H1 (cell line): ENCODE measurements at regions of chr19 and their contacts with region 1.

Region 1: GRCh38 chr19:48461982-48462655 is 6.7 kb downstream of the KCNJ14 start:
- DNase-seq: peak; percentile 75 to 88
- H3K4me3 ChIP-seq: no peak overlapping the region
- H3K27ac ChIP-seq: no peak overlapping the region
- H3K4me1 ChIP-seq: peaks cover 0 to 2% (median under 1%) of the 10 kb centered on the region in 4 experiments; a peak in 1 of 7 replicates
- H3K27me3 ChIP-seq: no peaks in the 10 kb centered on the region
- CTCF ChIP-seq: no peak
- EP300 ChIP-seq: no peak
- POLR2A ChIP-seq: no peak
- RAD21 ChIP-seq: no peak

Region 2: GRCh38 chr19:48445606-48446481 is 16.3 kb before region 1 on chr19 and contains the start of gene GRWD1:
- CTCF ChIA-PET with region 1: interaction called, 3 read pairs
- POLR2A ChIA-PET with region 1: interaction called, 17 read pairs
- DNase-seq: peak; percentile 90 to 91
- H3K4me3 ChIP-seq: peak within 1 kb of the TSS; percentile 80 to 99 (median 95)
- H3K27ac ChIP-seq: peak within 1 kb of the TSS; percentile 62
- H3K4me1 ChIP-seq: peaks cover 0 to 5% (median 4%) of the 10 kb centered on the region in 4 experiments; a peak in 4 of 7 replicates
- H3K27me3 ChIP-seq: no peaks in the 10 kb centered on the region
- CTCF ChIP-seq: no peak
- EP300 ChIP-seq: no peak
- POLR2A ChIP-seq: peak; percentile 47 to 94
- RAD21 ChIP-seq: 0 out of 4 replicates have a peak, but pooled peaks of 1 of the 2 experiments have one; percentile 0
- total RNA-seq, gene GRWD1: 61.9 and 64.9 TPM in 2 replicates

Region 3: DNA sequence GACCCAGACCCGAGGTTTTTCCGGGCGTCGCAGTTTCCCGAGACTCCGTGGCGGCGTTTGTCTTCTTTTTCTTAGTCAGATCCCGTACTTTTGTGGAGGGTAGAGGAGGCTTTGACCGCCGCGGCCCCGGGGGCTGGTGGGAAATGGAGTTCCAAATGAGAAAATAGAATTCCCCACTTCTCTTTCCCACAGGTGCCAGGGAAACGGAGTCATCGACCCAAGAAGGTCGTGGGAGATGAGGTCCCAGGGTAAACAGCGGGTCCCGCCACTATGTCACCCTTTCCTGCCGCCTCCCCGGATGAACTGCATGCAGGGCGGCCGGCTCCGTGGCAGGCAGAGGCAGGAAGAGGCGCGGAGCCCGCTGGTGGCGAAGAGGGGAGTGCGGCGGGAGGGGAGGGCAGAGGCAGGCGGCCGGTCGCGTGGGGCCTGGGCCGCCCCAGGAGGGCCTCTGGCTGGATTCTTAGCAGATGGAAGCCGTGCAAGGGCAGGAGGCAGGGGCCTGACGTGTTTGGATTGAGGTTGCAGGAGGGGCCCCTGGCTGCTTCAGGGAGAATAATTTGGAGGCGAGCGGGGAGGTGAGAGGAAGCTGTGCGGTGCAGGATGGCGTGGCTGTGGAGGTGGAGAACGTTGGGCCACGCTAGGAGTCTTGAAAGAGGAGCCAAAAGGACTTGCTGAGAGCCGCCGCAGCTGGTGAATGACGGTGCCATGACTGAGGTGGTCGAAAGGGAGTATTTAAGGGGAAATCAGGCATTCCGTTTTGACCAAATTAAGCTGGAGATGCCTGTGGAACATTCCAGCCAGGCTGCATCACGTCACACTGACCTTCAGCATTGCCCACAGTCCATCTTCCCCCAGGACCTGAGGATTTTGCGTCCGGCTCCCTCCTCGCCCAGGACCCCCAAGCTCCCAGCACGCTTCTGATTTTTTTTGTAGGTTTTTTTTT is 18.7 kb after region 1 on chr19:
- CTCF ChIA-PET with region 1: no interaction called
- POLR2A ChIA-PET with region 1: interaction called, 10 read pairs
- DNase-seq: no peak
- H3K4me3 ChIP-seq: peak overlapping the region in 1 of 4 experiments; percentile 29; a peak in 1 of 8 replicates
- H3K27ac ChIP-seq: no peak overlapping the region
- H3K4me1 ChIP-seq: peaks cover 0 to 1% (median 0%) of the 10 kb centered on the region in 4 experiments; a peak in 1 of 7 replicates
- H3K27me3 ChIP-seq: no peaks in the 10 kb centered on the region; a peak in 1 of 7 replicates
- CTCF ChIP-seq: no peak
- EP300 ChIP-seq: no peak
- POLR2A ChIP-seq: no peak; a peak in 1 of 3 replicates
- RAD21 ChIP-seq: no peak

Region 4: GRCh38 chr19:48553676-48554386 is 91.7 kb after region 1 on chr19:
- CTCF ChIA-PET with region 1: no interaction called
- POLR2A ChIA-PET with region 1: no interaction called
- DNase-seq: no peak
- H3K4me3 ChIP-seq: peak overlapping the region in 2 of 4 experiments; percentile 5 to 44; a peak in 3 of 8 replicates
- H3K27ac ChIP-seq: peak overlapping the region; percentile 41; the same call in 1 of the 2 replicates
- H3K4me1 ChIP-seq: peaks cover 0 to 24% (median 12%) of the 10 kb centered on the region in 4 experiments; a peak in 6 of 7 replicates
- H3K27me3 ChIP-seq: no peaks in the 10 kb centered on the region; a peak in 1 of 7 replicates
- CTCF ChIP-seq: 0 out of 4 replicates have a peak, but pooled peaks of 1 of the 3 experiments have one; percentile 9
- EP300 ChIP-seq: no peak
- POLR2A ChIP-seq: no peak
- RAD21 ChIP-seq: no peak